Activated CD8-positive, alpha-beta T cell treated with anti-CD3 and anti-CD28 coated beads, Interleukin-2, amount 10 ng/mL, durations not matched to agents 7 days and 5 days (primary cell): ENCODE measurements at regions of chr4 and their contacts with region 1.

Region 1: GRCh38 chr4:184649026-184649970 is at the starts of genes CASP3 and PRIMPOL:
- DNase-seq: peak; percentile 96
- ATAC-seq: peak; percentile 92
- H3K4me3 Mint-ChIP-seq: peak within 1 kb of the TSS; percentile 89
- H3K27ac Mint-ChIP-seq: peak within 1 kb of the TSS; percentile 88
- H3K4me1 Mint-ChIP-seq: peaks cover 51% of the 10 kb centered on the region
- H3K27me3 Mint-ChIP-seq: no peaks in the 10 kb centered on the region
- total RNA-seq, gene CASP3: 71.7 to 78.0 TPM
- total RNA-seq, gene PRIMPOL: 24.9 to 26.9 TPM

Region 2: GRCh38 chr4:184538023-184538599 is 111.2 kb before region 1 on chr4:
- CTCF ChIA-PET with region 1: no interaction called
- POLR2A ChIA-PET with region 1: interaction called, 14 read pairs
- DNase-seq: peak; percentile 79
- ATAC-seq: peak; percentile 54
- H3K4me3 Mint-ChIP-seq: peak overlapping the region; percentile 95
- H3K27ac Mint-ChIP-seq: peak overlapping the region; percentile 96
- H3K4me1 Mint-ChIP-seq: peaks cover 39% of the 10 kb centered on the region
- H3K27me3 Mint-ChIP-seq: no peaks in the 10 kb centered on the region